Naive thymus-derived CD4-positive, alpha-beta T cell (primary cell): ENCODE measurements at regions of chr7 and their contacts with region 1.

Region 1: DNA sequence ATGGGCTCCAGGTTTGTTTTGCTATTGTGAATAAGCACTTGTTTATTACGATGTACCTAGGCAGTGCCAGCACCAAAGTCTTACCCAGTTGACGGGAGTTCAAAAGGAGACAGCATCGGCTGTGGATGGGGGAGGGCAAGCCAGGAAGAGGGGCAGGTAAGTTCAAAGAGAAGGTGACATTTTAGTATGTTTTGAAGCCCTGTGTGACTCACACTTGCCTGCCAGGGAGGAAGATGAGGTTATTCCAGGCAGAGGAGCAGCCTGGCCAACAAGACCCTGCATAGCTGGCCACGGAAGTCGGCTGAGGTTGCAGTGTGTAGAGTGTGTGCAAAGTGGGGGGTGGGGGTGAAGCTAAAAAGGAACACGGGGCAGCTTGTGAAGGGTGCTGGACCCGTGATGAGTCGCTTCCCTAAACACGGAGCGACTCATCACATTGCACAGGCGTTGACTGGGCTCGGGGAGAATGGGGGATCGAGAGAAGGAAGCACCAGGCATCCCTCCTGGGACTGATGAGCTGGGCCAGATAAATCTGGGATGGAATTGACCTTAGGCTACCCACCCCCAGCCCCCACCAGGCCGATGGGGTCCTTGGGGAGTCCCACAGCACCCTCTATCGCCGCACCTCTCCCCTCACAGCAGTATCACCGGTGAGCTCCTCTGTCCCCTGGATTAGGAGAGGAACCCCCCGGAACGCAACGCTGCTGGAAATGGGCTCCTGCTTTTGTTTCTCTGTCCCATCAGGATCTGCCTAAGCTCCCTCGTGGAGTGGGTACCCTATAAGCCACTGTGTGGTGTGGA is 97.9 kb upstream of the IKZF1 start:
- DNase-seq: peak in 8 of 9 donors; percentile 53 to 85 (median 72)
- ATAC-seq: peak; percentile 67
- H3K4me3 ChIP-seq: peak overlapping the region; percentile 32
- H3K4me3 Mint-ChIP-seq: peak overlapping the region; percentile 54 to 87 (median 78)
- H3K27ac ChIP-seq: peak overlapping the region; percentile 66
- H3K27ac Mint-ChIP-seq: peak overlapping the region; percentile 86 to 98 (median 96)
- H3K4me1 ChIP-seq: peaks cover 20 to 73% of the 10 kb centered on the region in 2 donors
- H3K4me1 Mint-ChIP-seq: peaks cover 65 to 94% (median 81%) of the 10 kb centered on the region in 7 donors
- H3K27me3 ChIP-seq: no peaks in the 10 kb centered on the region
- H3K27me3 Mint-ChIP-seq: no peaks in the 10 kb centered on the region

Region 2: DNA sequence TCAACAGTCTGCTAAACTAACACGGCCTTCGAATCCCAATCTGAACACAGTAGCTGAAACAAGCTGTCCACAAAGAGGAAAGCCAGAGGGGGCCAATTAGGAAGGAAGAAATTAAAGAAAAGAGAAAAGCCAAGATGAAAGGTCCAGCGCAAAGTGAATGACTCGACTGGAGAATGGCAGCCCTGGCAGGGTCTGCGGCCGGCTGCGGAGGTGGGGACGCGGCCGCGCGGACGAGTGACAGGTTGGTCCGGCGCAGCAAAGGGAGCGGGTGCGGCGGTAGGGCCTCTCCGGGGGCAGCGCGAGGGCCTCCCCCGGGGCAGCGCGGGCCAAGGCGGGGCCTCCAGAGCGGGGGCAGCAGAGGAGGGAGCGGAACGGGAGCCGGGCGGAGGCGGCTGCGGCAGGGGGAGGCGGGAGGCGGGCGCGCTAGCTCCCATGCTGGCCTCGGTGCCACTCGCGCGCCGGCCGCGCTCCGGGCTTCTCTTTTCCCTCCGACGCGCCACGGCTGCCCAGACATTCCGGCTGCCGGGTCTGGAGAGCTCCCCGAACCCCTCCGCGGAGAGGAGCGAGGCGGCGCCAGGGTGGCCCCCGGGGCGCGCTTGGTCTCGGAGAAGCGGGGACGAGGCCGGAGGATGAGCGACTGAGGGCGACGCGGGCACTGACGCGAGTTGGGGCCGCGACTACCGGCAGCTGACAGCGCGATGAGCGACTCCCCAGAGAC is 433.3 kb before region 1 on chr7 and contains the start of gene VWC2:
- CTCF ChIA-PET with region 1: no interaction called
- POLR2A ChIA-PET with region 1: no interaction called
- intact Hi-C with region 1: no loop called
- DNase-seq: no peak
- ATAC-seq: no peak
- H3K4me3 ChIP-seq: no peak within 1 kb of the TSS
- H3K4me3 Mint-ChIP-seq: peak within 1 kb of the TSS in 9 of 10 donors; percentile 12 to 76 (median 44)
- H3K27ac ChIP-seq: no peak within 1 kb of the TSS
- H3K27ac Mint-ChIP-seq: peak within 1 kb of the TSS in 1 of 9 donors; percentile 55
- H3K4me1 ChIP-seq: no peaks in the 10 kb centered on the region
- H3K4me1 Mint-ChIP-seq: peaks cover 3 to 14% (median 10%) of the 10 kb centered on the region in 7 donors
- H3K27me3 ChIP-seq: no peaks in the 10 kb centered on the region
- H3K27me3 Mint-ChIP-seq: peaks cover 48 to 75% (median 66%) of the 10 kb centered on the region in 5 donors
- total RNA-seq, gene VWC2: not detected

Region 3: DNA sequence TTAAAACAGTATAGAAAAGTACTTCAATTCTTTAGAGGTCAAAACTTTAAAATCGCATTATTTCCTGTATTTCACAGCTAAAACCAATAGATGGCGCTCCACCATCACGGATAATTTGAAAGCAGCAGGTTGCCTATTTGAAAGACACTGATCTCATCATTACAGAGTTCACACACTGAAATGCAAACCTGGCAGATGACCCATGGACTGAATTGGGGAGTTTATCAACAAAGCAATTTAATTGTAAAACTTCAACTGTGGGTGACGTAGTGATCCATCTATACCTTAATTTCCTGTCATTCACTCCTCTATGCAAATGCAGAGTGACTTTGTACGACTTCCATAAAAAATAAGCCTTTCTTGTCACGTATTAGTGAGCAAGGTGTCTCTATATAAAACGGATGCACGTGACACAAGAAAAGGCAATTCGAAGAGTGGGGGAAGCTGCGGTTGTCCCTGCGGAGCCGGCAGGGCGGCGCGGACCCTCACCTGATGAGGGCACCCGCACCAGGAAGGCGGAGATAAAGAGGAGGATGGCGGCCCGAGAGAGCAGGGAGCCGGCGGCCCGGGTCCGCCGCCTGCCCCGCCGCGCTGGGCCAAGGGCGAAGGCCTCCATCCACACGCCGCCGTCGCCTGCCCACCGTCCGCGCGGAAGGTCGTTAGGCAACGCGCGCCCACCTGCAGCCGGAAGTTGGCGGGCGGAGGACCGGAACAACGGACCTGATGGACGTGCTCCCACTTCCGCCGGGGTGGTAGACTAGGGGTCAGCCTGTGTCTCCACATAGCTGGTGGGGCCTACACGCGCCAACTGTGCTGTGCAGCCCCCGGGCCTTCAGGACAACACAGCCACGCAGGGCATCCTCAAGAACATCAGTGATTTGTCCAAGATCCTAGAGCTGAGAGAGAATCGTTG is 113.8 kb before region 1 on chr7 and contains the start of gene ZPBP:
- CTCF ChIA-PET with region 1: interaction called, 3 read pairs
- POLR2A ChIA-PET with region 1: no interaction called
- intact Hi-C with region 1: loop called (anchors 2 to 5 kb)
- DNase-seq: peak in 8 of 9 donors; percentile 34 to 77 (median 70)
- ATAC-seq: peak; percentile 88
- H3K4me3 ChIP-seq: peak within 1 kb of the TSS; percentile 59
- H3K4me3 Mint-ChIP-seq: peak within 1 kb of the TSS; percentile 85 to 96 (median 89)
- H3K27ac ChIP-seq: peak within 1 kb of the TSS; percentile 62
- H3K27ac Mint-ChIP-seq: peak within 1 kb of the TSS; percentile 62 to 93 (median 88)
- H3K4me1 ChIP-seq: no peaks in the 10 kb centered on the region
- H3K4me1 Mint-ChIP-seq: peaks cover 8 to 22% (median 10%) of the 10 kb centered on the region in 7 donors
- H3K27me3 ChIP-seq: no peaks in the 10 kb centered on the region
- H3K27me3 Mint-ChIP-seq: peaks cover 0 to 27% (median 0%) of the 10 kb centered on the region in 5 donors
- total RNA-seq, gene ZPBP: not detected

Region 4: DNA sequence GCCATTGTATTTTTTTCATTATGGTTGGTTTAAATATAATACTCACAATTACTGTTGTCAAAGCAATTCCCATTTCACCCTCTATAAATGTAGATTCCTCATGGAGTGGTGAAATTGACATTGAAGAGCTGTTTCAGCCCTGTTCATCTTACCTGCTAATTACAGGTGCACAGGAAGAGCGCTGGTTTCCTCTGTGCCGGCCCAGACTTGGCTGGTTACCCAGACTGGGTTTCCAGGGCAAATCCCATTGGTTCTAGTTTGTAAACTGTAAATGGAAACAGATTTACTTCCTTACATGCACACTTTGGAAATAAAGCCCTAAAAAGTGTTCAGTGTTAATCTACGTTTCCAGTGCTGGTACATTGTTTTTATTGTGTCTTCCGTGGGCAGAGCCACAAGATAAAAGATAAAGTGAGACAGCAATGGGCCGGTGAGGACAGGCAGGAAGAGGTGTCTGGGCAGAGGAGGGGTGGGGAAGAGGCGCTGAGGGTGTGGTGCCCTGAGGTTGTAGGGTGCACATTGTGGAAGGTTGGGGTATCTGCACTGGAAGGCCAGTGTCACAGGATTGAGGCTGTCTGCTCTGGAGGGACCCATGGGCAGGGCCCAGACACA is 42.0 kb before region 1 on chr7:
- CTCF ChIA-PET with region 1: interaction called, 3 read pairs
- POLR2A ChIA-PET with region 1: interaction called, 5 read pairs
- intact Hi-C with region 1: loop called (anchors 2 kb)
- DNase-seq: peak in 6 of 9 donors; percentile 18 to 41 (median 35)
- ATAC-seq: peak; percentile 67
- H3K4me3 ChIP-seq: peak overlapping the region; percentile 19
- H3K4me3 Mint-ChIP-seq: peak overlapping the region; percentile 31 to 83 (median 73)
- H3K27ac ChIP-seq: no peak overlapping the region
- H3K27ac Mint-ChIP-seq: peak overlapping the region; percentile 67 to 92 (median 78)
- H3K4me1 ChIP-seq: peaks cover 34 to 37% of the 10 kb centered on the region in 2 donors
- H3K4me1 Mint-ChIP-seq: peaks cover 31 to 61% (median 53%) of the 10 kb centered on the region in 7 donors
- H3K27me3 ChIP-seq: no peaks in the 10 kb centered on the region
- H3K27me3 Mint-ChIP-seq: peaks cover 0 to 2% (median 0%) of the 10 kb centered on the region in 5 donors

Region 5: GRCh38 chr7:50272808-50273207 is 66.2 kb after region 1 on chr7:
- CTCF ChIA-PET with region 1: interaction called, 34 read pairs
- POLR2A ChIA-PET with region 1: interaction called, 101 read pairs
- intact Hi-C with region 1: no loop called
- DNase-seq: no peak
- ATAC-seq: no peak
- H3K4me3 ChIP-seq: no peak overlapping the region
- H3K4me3 Mint-ChIP-seq: peak overlapping the region in 3 of 10 donors; percentile 7 to 63 (median 23)
- H3K27ac ChIP-seq: no peak overlapping the region
- H3K27ac Mint-ChIP-seq: peak overlapping the region in 8 of 9 donors; percentile 6 to 99 (median 76)
- H3K4me1 ChIP-seq: peaks cover 31 to 73% of the 10 kb centered on the region in 2 donors
- H3K4me1 Mint-ChIP-seq: peaks cover 48 to 94% (median 83%) of the 10 kb centered on the region in 7 donors
- H3K27me3 ChIP-seq: no peaks in the 10 kb centered on the region
- H3K27me3 Mint-ChIP-seq: no peaks in the 10 kb centered on the region

Region 6: DNA sequence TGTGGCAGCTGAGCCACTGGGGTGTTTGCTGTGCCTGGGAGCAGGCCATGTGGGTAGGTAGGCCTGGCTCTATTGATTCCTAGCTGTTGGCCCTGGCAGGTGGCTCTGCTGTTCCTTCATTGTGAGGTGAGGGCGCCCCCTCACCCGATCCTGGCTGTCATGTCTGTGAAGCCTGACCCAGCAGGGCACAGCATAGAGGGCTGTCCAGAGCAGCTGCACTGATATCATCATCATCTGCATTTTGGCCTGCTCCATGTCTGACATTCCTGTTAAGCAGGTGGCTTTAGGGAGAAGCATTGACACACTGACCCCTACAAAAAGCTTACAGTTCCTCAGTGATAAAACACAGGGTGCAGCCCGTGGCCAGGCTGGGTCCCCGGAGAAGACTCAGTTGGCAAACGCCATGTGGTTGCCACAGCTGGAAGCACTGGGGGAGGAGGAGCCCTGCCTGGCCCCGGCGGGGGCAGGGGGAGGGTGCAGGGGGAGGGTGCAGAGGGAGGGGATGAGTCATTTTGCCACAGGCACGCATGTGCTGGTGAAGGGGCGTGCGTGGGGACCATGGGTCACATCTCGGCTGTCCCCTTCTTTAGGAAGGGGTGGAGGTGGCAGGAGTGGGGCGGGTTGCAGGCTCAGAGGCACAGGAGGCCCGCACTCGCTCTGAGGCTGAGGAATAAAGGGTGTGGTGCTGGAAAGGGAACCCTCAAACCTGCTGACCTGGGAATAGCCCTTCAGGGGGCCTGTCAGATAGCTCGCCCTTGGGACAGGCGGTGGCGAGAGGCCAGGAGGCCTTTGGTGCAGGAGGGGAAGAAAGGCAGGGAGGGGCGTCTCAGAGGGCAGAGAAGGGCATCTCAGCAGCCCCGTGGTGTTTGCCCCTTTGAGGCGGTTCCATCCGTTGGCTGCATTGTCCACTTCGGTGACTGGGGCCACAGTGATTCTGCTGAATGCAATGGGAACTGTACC is 129.4 kb after region 1 on chr7:
- CTCF ChIA-PET with region 1: interaction called, 13 read pairs
- POLR2A ChIA-PET with region 1: interaction called, 42 read pairs
- intact Hi-C with region 1: loop called (anchors 1 kb)
- DNase-seq: peak in 6 of 9 donors; percentile 54 to 86 (median 60)
- ATAC-seq: peak; percentile 62
- H3K4me3 ChIP-seq: peak overlapping the region; percentile 29
- H3K4me3 Mint-ChIP-seq: peak overlapping the region in 1 of 10 donors; percentile 90
- H3K27ac ChIP-seq: peak overlapping the region; percentile 93
- H3K27ac Mint-ChIP-seq: no peak overlapping the region
- H3K4me1 ChIP-seq: peaks cover 99% of the 10 kb centered on the region in 2 donors
- H3K4me1 Mint-ChIP-seq: peaks cover 0 to 68% (median 17%) of the 10 kb centered on the region in 7 donors
- H3K27me3 ChIP-seq: no peaks in the 10 kb centered on the region
- H3K27me3 Mint-ChIP-seq: no peaks in the 10 kb centered on the region

Region 7: GRCh38 chr7:50359995-50360925 is 153.6 kb after region 1 on chr7:
- CTCF ChIA-PET with region 1: interaction called, 181 read pairs
- POLR2A ChIA-PET with region 1: interaction called, 325 read pairs
- intact Hi-C with region 1: no loop called
- DNase-seq: peak; percentile 58 to 93 (median 88)
- ATAC-seq: peak; percentile 92
- H3K4me3 ChIP-seq: peak overlapping the region; percentile 5
- H3K4me3 Mint-ChIP-seq: peak overlapping the region; percentile 73 to 89 (median 78)
- H3K27ac ChIP-seq: peak overlapping the region; percentile 94
- H3K27ac Mint-ChIP-seq: peak overlapping the region in 6 of 9 donors; percentile 91 to 100 (median 100)
- H3K4me1 ChIP-seq: peaks cover 95 to 98% of the 10 kb centered on the region in 2 donors
- H3K4me1 Mint-ChIP-seq: peaks cover 86 to 100% (median 97%) of the 10 kb centered on the region in 7 donors
- H3K27me3 ChIP-seq: no peaks in the 10 kb centered on the region
- H3K27me3 Mint-ChIP-seq: no peaks in the 10 kb centered on the region

Region 8: DNA sequence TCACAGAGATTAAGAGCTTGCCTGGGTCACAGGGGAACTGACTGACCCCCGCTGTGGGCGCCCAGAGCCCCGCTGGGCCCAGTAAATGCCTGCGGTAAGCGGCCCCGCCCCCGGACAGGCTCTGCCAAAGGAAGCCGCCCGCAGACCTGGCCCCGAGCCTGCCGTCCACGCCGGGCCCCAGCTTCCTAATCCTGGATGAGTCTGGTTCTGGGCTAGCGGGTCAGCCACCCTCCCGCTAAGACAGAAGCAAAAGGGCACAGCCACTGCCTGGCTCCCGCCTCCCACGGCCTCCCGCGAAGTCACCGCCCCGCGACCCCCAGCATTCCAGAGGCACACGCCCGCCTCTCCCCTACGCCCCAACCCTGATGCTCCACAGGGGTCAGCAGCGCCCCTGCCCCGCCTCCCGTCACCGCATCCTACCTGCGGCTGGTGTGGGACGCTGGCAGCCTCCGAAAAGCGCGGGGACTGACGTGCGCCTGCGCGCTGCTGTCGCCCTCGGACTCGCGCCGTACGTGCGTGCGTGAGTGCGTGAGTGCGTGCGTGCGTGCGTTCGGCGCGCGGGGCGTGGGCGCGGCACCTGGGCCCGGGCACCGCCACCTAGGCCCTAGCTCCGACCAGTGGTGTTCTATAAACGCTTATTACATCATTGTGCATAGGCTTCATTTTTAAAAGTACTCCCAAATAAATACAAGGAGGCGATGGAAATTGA is 243.4 kb after region 1 on chr7 and contains the start of gene FIGNL1:
- CTCF ChIA-PET with region 1: no interaction called
- POLR2A ChIA-PET with region 1: no interaction called
- intact Hi-C with region 1: loop called in 1 of 2 experiments (anchors 1 kb)
- DNase-seq: peak; percentile 61 to 87 (median 84)
- ATAC-seq: peak; percentile 98
- H3K4me3 ChIP-seq: peak within 1 kb of the TSS; percentile 63
- H3K4me3 Mint-ChIP-seq: peak within 1 kb of the TSS; percentile 91 to 96 (median 94)
- H3K27ac ChIP-seq: peak within 1 kb of the TSS; percentile 94
- H3K27ac Mint-ChIP-seq: peak within 1 kb of the TSS; percentile 92 to 99 (median 96)
- H3K4me1 ChIP-seq: peaks cover 13 to 14% of the 10 kb centered on the region in 2 donors
- H3K4me1 Mint-ChIP-seq: peaks cover 14 to 43% (median 29%) of the 10 kb centered on the region in 7 donors
- H3K27me3 ChIP-seq: no peaks in the 10 kb centered on the region
- H3K27me3 Mint-ChIP-seq: peaks cover 0 to 11% (median 0%) of the 10 kb centered on the region in 5 donors
- total RNA-seq, gene FIGNL1: 7.7 to 30.2 (median 14.3) TPM